Mammary epithelial cell (primary cell): ENCODE measurements at regions of chr21 and their contacts with region 1.

Region 1: DNA sequence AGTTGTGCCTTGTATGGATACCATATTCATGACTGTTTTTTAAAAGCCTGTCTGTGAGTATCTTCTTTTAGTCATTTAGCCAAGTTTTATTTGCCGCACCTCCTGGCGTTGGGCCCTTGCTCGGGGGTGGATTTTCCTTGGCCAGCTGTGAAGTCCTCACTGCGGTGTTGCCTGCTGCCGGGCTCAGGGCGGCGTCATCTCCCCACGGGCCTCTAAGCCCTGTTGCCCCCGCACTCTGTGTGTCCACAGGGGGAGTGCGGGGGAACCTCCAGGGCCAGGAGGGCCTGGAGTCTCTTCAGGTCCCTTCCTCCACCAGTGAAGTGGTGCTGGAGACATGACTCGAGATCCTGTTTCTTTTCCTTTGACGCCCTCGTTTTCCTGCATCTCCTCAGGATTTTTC is 65.8 kb upstream of the DIP2A start:
- DNase-seq: no peak
- H3K4me3 ChIP-seq: no peak overlapping the region
- H3K27ac ChIP-seq: no peak overlapping the region
- H3K4me1 ChIP-seq: peaks cover 8% of the 10 kb centered on the region
- H3K27me3 ChIP-seq: no peaks in the 10 kb centered on the region
- CTCF ChIP-seq: peak in 1 of 2 donors; percentile 6

Region 2: GRCh38 chr21:45950734-45951515 is 442.0 kb before region 1 on chr21:
- CTCF ChIA-PET with region 1: no interaction called
- dilution Hi-C with region 1: loop called (anchors 10 kb)
- in situ Hi-C with region 1: no loop called
- intact Hi-C with region 1: no loop called
- DNase-seq: peak; percentile 58
- H3K4me3 ChIP-seq: no peak overlapping the region
- H3K27ac ChIP-seq: peak overlapping the region; percentile 6
- H3K4me1 ChIP-seq: peaks cover 18% of the 10 kb centered on the region
- H3K27me3 ChIP-seq: no peaks in the 10 kb centered on the region
- CTCF ChIP-seq: no peak

Region 3: GRCh38 chr21:46172863-46173528 is 219.9 kb before region 1 on chr21:
- CTCF ChIA-PET with region 1: no interaction called
- dilution Hi-C with region 1: no loop called
- in situ Hi-C with region 1: no loop called
- intact Hi-C with region 1: no loop called
- DNase-seq: no peak
- H3K4me3 ChIP-seq: no peak overlapping the region
- H3K27ac ChIP-seq: no peak overlapping the region
- H3K4me1 ChIP-seq: no peaks in the 10 kb centered on the region
- H3K27me3 ChIP-seq: no peaks in the 10 kb centered on the region
- CTCF ChIP-seq: no peak

Region 4: DNA sequence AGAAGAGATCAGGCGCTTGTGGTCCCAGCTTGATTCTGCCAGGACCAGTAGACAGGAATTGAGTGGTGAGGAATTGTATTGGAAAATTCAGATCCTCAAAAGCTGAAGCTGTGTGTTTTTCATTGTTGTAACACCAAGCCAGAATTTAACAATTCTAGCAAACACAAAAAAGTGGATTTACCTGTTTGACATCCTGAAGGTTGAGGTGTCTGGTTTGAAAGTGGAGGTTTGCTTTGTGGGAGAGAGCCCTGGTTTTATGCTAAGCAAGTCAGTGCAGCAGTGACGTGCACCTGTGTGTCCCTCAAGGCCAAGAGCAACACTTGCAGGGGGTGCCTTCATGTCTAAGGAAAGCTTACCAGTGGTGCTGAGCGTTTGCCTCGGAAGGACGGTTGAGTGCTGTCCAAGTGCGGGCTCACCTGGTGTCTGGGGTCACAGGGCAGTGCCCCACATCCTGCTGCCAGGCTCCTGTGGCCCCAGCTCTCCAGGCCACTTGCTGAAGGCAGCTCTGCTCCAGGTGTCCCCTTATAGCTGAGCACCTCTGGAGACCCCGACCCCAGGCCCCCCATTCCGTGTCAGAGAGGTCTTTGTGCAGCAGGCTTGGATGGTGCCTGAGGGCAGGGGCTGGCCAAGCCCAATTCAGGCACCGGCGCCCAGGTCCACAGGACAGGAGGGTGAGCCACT is 41.3 kb before region 1 on chr21:
- CTCF ChIA-PET with region 1: no interaction called
- dilution Hi-C with region 1: loop called (anchors 5 kb)
- in situ Hi-C with region 1: no loop called
- intact Hi-C with region 1: no loop called
- DNase-seq: no peak
- H3K4me3 ChIP-seq: no peak overlapping the region
- H3K27ac ChIP-seq: no peak overlapping the region
- H3K4me1 ChIP-seq: no peaks in the 10 kb centered on the region
- H3K27me3 ChIP-seq: no peaks in the 10 kb centered on the region
- CTCF ChIP-seq: no peak

Region 5: DNA sequence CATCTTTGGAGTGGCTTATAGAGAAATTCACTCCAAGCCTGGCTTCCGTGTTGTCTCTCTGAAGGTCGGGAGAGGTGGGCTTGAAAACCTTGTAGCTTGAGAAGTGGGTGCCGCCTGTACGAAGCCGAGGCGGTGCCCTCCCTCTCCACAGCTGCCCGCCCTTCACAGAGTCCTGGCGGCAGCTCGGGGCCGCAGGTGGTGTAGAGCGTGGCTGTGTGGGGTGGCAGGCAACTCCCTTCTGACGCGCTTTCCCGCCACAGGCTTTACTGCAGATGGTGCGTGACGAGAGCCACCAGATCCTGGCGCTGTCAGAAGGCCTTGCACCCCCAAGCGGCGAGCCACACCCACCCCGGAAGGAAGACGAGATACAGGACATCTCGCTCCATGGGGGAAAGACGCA is 32.6 kb after region 1 on chr21:
- CTCF ChIA-PET with region 1: no interaction called
- dilution Hi-C with region 1: loop called (anchors 5 kb)
- in situ Hi-C with region 1: no loop called
- intact Hi-C with region 1: no loop called
- DNase-seq: no peak
- H3K4me3 ChIP-seq: no peak overlapping the region
- H3K27ac ChIP-seq: no peak overlapping the region
- H3K4me1 ChIP-seq: no peaks in the 10 kb centered on the region
- H3K27me3 ChIP-seq: no peaks in the 10 kb centered on the region
- CTCF ChIP-seq: no peak

Region 6: DNA sequence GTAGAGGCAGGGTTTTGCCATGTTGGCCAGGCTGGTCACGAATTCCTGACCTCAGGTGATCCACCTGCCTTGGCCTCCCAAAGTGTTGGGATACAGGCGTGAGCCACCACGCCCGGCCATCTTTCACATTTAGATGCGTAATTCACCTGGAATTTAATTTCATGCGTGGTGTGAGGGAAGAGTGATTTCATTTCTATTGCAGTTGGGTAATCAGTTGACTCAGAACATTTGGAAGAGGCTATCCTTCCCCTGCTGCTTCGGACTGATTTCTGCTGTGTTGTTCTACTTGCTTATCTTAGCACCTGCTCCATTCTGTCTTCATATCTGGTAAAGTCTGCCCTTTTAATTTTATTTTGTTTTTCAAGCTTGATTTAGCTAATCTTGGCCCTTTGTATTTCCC is 84.8 kb after region 1 on chr21:
- CTCF ChIA-PET with region 1: no interaction called
- dilution Hi-C with region 1: loop called (anchors 5 kb)
- in situ Hi-C with region 1: no loop called
- intact Hi-C with region 1: no loop called
- DNase-seq: peak; percentile 80
- H3K4me3 ChIP-seq: no peak overlapping the region
- H3K27ac ChIP-seq: no peak overlapping the region
- H3K4me1 ChIP-seq: peaks cover 9% of the 10 kb centered on the region
- H3K27me3 ChIP-seq: no peaks in the 10 kb centered on the region
- CTCF ChIP-seq: no peak